ENCODE measurements at regions of chr4 and their contacts with region 1.

Region 1: DNA sequence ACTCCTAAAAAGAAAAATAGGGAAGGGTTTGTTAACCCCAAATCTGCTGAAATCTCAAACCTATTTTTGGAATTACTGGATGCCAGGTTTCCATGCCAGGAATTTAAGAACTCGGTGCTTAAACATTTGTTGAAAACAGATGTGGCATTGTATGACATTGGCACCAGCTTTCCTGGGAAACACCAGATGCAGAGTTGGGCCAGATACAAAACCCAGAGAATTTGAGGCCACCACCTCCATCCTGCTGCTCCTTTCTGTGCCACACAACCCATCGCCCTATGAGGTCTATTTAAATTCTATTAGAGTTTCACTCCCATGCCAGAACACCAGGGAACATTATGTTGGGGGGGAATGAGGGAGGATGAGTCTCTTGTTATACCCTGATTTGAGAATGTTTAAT is 71.7 kb downstream of the ARAP2 start:
- DNase-seq: no peak
- ATAC-seq: no peak
- H3K4me3 ChIP-seq: no peak overlapping the region
- H3K4me3 Mint-ChIP-seq: no peak overlapping the region
- H3K27ac ChIP-seq: no peak overlapping the region
- H3K27ac Mint-ChIP-seq: no peak overlapping the region
- H3K4me1 ChIP-seq: no peaks in the 10 kb centered on the region
- H3K4me1 Mint-ChIP-seq: peaks cover 0 to 7% (median 0%) of the 10 kb centered on the region in 7 donors
- H3K27me3 ChIP-seq: no peaks in the 10 kb centered on the region
- H3K27me3 Mint-ChIP-seq: no peaks in the 10 kb centered on the region

Region 2: DNA sequence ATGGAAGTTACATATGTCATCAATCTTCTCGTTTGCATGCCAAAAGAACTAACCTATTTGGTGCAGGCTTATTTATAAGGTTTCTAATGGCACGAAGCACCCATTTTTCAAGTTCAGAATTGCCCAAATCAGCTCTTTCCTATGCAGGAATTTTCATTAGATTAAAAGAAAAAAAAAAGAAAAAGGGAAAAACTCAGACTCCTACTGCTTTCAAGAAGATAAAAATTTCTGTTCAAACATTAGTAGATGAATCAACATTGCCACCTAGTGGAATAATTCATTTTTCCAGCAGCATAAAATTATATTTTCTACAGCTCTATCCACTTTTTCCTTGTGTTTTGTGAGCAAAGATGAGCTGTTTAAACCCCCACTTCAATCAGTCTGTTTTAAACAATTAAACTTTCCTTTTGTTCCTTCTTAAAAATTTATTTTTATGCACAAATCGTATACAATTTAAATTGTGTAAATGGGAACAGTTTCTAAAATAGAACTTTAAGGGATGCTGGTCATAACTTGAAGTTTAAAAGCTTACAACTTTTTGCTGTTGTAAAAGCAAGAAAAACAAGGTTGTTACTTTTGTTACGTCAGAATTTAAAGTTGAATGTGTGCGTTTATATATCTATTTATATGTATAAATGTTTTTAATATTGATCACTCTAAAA is 238.2 kb before region 1 on chr4:
- CTCF ChIA-PET with region 1: no interaction called
- POLR2A ChIA-PET with region 1: no interaction called
- intact Hi-C with region 1: loop called in 1 of 2 experiments (anchors 10 kb)
- DNase-seq: peak in 3 of 9 donors; percentile 2 to 24 (median 8)
- ATAC-seq: no peak
- H3K4me3 ChIP-seq: no peak overlapping the region
- H3K4me3 Mint-ChIP-seq: no peak overlapping the region
- H3K27ac ChIP-seq: no peak overlapping the region
- H3K27ac Mint-ChIP-seq: no peak overlapping the region
- H3K4me1 ChIP-seq: no peaks in the 10 kb centered on the region
- H3K4me1 Mint-ChIP-seq: no peaks in the 10 kb centered on the region
- H3K27me3 ChIP-seq: no peaks in the 10 kb centered on the region
- H3K27me3 Mint-ChIP-seq: peaks cover 0 to 11% (median 9%) of the 10 kb centered on the region in 5 donors